Heart right ventricle (tissue), 16 donors: ENCODE measurements at regions of chr1 and their contacts with region 1.

Region 1: DNA sequence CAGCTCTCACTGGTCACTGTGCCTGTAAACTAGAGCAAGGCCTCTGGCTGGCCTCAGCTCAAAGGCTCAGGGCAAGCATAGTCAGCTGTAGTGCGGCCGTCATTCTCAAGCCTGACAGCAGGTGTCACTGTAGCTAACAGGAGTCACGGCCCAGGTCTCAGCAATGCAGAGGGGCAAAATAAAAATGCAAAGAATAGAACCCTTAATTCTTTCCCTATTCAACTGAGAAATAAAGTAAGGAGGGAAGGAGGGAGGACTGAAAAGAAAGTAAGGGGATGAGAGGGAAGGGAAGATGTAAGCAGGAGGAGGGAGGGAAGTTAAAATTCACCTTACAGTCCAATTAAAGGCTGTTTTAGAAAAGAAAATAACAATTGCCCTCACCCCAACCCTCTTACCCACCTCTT is 106.1 kb downstream of the KIAA0319L start:
- DNase-seq: peak; percentile 81 to 85
- ATAC-seq: peak; percentile 83 to 96 (median 88)
- H3K4me3 ChIP-seq: no peak overlapping the region
- H3K27ac ChIP-seq: peak overlapping the region in 4 of 10 donors; percentile 39 to 76 (median 63)
- H3K4me1 ChIP-seq: peaks cover 3 to 90% (median 40%) of the 10 kb centered on the region in 9 donors
- H3K27me3 ChIP-seq: no peaks in the 10 kb centered on the region
- CTCF ChIP-seq: peak; percentile 68 to 94 (median 85)

Region 2: DNA sequence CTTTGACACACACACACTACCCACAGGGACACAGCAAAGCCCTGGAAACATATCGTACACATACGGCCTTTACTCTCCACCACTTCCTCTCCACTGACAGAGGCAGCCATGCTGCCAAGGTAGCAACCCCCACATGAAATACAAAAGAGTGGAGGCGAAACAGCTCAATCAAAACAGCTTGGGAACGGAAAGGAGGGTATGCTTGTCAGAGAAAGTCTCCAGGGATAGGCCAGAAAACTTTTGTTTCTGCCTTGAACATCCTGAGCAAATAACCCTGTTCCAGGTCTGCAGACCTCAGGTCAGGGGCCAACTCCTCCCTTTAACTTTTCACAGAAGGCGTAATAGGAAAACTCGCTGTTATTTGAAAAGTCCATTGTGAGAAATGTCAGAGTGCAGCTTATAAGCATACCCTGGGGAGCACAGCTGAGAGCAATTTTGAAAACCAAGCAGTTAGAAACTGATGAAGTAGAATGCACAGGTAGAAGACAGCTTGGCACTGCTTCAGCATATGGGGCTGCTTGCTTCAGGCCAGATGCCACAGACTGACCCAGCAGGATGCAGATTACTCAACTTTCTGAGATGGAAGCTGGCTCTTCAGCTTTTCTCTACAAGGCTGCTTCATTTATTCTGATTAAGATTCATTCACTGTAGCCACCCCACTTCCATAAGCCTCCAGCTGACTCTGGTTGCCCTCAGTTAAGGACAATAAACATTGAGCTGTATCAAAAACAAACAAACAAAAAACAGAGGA is 88.1 kb after region 1 on chr1:
- intact Hi-C with region 1: loop called in 4 of 10 experiments (anchors 5 kb)
- DNase-seq: no peak
- ATAC-seq: peak in 6 of 8 donors; percentile 34 to 55 (median 47)
- H3K4me3 ChIP-seq: peak overlapping the region in 1 of 10 donors; percentile 3
- H3K27ac ChIP-seq: peak overlapping the region in 9 of 10 donors; percentile 41 to 86 (median 75)
- H3K4me1 ChIP-seq: peaks cover 4 to 97% (median 74%) of the 10 kb centered on the region in 9 donors
- H3K27me3 ChIP-seq: no peaks in the 10 kb centered on the region
- CTCF ChIP-seq: no peak

Region 3: GRCh38 chr1:35557292-35558063 is 106.4 kb after region 1 on chr1 and contains the starts of genes KIAA0319L and NCDN:
- intact Hi-C with region 1: loop called in 5 of 10 experiments (anchors 2 to 5 kb)
- DNase-seq: peak; percentile 96 to 97
- ATAC-seq: peak; percentile 94 to 98 (median 97)
- H3K4me3 ChIP-seq: peak within 1 kb of the TSS; percentile 74 to 98 (median 89)
- H3K27ac ChIP-seq: peak within 1 kb of the TSS; percentile 97 to 100 (median 98)
- H3K4me1 ChIP-seq: peaks cover 0 to 84% (median 59%) of the 10 kb centered on the region in 9 donors
- H3K27me3 ChIP-seq: no peaks in the 10 kb centered on the region
- CTCF ChIP-seq: peak in 1 of 9 donors; percentile 6
- total RNA-seq, gene KIAA0319L: 57.9 to 84.3 (median 78.3) TPM
- total RNA-seq, gene NCDN: 20.3 to 51.7 (median 34.5) TPM

Region 4: DNA sequence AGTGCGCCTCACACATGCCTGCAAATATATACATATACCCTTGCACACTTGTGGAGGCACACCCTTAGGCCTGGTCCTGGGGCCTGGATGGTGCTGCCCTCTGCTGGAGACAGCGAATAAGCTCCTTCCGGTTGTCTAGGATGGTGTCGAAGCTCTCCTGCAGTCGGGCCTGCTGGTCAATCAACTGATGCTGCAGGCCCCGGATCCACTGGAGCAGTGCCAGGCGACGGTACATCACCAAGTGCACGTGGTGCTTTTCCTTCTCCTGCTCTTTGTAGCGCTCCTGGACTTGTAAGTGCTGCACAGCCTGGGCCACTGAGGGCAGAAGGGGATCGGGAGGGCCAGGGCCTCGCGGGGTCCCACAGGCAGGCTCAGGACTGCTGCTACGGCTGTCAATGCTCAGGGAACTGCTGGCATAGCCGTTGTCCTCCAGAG is 264.5 kb after region 1 on chr1:
- intact Hi-C with region 1: loop called in 7 of 10 experiments (anchors 5 to 10 kb)
- DNase-seq: peak; percentile 58 to 63
- ATAC-seq: peak; percentile 30 to 64 (median 53)
- H3K4me3 ChIP-seq: no peak overlapping the region
- H3K27ac ChIP-seq: no peak overlapping the region
- H3K4me1 ChIP-seq: peaks cover 4 to 41% (median 32%) of the 10 kb centered on the region in 9 donors
- H3K27me3 ChIP-seq: no peaks in the 10 kb centered on the region
- CTCF ChIP-seq: peak; percentile 66 to 92 (median 85)

Region 5: DNA sequence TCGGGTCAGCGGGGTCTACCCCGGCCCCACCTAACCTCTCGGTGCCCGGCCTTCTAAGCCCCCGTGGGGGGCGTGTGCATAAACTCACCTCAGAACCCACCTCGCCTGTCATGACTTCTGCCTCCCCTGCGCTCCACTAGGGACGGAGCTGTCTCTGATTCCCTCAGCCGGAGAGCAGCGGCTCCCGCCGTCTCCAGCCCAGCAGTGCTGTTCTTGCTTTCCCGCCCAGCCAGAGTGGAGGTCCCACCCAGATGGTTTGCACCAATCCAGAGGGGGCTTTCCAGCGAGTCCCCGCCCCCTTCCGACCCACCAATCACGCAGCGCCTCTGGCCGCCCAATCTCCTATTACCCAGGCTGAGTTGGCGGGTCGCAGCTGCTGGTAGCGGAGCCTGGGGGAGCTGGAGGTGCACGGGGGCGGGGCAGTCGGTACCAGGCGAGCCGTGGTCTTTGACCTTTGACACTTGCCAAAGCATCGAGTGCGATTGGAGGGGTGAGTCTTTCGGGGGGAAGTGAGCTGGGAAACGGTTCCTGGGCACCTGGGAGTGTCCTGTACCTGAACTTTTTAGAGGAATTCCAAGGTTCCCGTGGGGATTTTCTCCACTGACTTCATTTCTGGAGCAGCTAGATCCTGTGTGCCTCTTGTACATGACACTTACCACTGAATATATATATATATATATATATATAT is 318.8 kb after region 1 on chr1 and contains the start of gene CLSPN:
- intact Hi-C with region 1: loop called in 2 of 10 experiments (anchors 5 kb)
- DNase-seq: peak; percentile 94 to 96
- ATAC-seq: peak; percentile 99 to 100 (median 99)
- H3K4me3 ChIP-seq: peak within 1 kb of the TSS; percentile 61 to 95 (median 76)
- H3K27ac ChIP-seq: peak within 1 kb of the TSS in 9 of 10 donors; percentile 67 to 86 (median 85)
- H3K4me1 ChIP-seq: peaks cover 0 to 14% (median 6%) of the 10 kb centered on the region in 9 donors
- H3K27me3 ChIP-seq: no peaks in the 10 kb centered on the region
- CTCF ChIP-seq: no peak
- total RNA-seq, gene CLSPN: 0.26 to 2.8 (median 0.43) TPM